Left ventricle myocardium superior (tissue), 1 donor: ENCODE measurements at regions of chr1 and their contacts with region 1.

Region 1: DNA sequence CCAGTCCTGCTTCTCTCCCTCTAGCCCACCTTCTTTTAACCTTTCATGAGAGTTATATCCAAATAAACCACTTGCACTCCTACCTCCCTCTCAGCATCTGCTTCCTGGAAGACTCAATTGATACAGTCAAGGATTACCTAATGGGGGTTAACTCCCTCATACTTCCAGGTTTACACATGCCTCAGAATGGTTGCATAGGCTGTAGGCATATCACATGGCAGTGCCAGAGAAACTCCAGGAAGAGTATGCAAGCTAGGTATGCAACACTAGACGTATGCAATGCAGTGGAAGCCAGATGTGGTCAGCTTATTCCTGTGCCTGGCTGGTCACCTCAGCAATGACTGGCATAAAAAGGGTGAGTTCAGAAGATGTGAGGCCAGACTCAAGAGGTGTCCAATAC is 32.7 kb upstream of the VANGL1 start:
- DNase-seq: no peak
- ATAC-seq: no peak

Region 2: DNA sequence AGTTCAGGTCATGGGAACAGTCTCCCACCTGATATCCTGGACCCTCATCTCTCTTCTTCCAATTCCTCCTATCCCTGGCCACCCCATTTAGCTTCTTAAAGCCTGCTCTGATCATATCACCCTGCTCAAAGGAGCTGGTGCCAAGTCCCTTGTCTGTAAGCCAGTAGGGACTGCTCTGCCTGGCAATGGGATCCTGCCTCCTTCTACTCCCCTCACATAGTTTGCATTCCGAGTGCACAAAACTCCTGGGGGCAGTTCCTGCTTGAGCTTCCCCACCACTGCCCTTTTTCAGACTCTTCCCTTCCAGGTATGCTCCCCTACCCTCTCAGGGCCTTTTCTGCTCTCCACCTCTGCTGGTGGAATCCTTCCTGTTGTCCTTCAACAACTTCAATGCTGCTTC is 319.1 kb before region 1 on chr1:
- intact Hi-C with region 1: no loop called
- DNase-seq: no peak
- ATAC-seq: peak; percentile 20

Region 3: GRCh38 chr1:115411371-115412063 is 197.5 kb before region 1 on chr1:
- intact Hi-C with region 1: no loop called
- DNase-seq: no peak
- ATAC-seq: peak; percentile 46

Region 4: DNA sequence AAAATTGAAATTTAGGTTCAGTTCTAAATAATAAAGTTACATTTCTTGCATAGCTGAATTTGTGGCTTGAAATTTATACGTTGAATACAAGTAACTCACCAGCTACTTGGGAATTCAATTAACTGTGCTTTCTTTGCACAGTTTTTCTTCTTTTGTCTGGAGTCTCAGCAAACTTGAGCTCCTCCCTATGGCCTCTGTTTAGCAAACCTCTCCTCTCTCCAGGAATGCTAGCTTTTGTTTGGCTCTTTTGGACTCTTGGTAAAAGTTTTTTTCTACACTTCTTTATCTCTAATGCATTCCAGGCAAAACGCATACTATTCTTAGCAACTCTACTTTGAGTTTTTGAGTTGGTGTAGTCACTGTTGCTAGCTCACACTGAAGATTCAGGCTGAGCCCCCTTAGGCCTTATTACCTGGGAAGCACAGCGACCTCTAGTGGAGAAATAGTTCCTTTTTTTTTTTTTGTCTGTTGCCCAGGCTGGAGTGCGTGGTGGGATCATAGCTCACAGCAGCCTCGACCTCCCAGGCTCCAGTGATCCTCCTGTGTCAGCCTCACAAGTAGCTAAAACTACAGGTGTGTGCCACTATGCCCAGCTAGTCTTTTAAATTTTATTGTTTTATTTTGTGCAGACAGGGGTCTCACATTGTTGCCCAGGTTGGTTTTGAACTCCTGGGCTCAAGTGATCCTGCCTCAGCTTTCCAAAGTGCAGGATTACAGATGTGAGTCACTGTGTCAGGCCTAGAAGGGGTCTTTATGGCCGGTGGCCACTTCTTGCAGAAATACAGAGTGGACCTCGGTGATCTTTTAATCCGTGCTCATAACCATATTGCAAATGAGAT is 97.8 kb after region 1 on chr1:
- intact Hi-C with region 1: loop called (anchors 5 kb)
- DNase-seq: no peak
- ATAC-seq: peak; percentile 35

Region 5: DNA sequence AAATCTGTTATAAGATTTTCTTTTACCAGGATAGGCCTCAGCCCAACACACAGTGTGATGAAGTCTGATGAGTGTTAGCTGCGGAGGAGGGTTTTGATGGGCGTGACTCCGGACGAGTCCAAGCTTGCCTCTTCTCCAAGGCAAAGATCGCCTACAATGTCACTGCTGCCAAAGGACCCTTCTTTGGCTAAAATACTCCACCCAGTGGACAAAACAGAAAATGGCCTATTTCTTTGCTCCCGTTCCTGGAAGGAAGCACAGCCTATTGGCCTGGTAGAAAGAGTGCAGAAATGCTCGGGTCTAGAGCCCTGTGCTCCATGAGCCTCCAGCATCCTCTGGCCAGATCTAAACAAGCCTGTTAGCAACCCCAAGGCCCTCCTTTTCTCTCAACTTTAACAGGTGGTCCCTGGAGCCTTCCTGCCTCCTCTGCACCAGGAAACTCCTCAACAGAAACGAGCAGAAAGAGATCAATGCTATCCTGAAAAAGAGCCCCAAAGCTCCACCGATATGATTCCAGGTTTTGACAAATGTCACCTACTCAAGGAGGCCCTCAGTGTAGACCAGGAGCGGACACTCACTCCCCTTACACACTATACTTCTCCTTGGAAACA is 162.9 kb after region 1 on chr1:
- intact Hi-C with region 1: loop called (anchors 5 kb)
- DNase-seq: peak; percentile 64
- ATAC-seq: peak; percentile 75